ENCODE measurements at regions of chr1 and their contacts with region 1.

Region 1: DNA sequence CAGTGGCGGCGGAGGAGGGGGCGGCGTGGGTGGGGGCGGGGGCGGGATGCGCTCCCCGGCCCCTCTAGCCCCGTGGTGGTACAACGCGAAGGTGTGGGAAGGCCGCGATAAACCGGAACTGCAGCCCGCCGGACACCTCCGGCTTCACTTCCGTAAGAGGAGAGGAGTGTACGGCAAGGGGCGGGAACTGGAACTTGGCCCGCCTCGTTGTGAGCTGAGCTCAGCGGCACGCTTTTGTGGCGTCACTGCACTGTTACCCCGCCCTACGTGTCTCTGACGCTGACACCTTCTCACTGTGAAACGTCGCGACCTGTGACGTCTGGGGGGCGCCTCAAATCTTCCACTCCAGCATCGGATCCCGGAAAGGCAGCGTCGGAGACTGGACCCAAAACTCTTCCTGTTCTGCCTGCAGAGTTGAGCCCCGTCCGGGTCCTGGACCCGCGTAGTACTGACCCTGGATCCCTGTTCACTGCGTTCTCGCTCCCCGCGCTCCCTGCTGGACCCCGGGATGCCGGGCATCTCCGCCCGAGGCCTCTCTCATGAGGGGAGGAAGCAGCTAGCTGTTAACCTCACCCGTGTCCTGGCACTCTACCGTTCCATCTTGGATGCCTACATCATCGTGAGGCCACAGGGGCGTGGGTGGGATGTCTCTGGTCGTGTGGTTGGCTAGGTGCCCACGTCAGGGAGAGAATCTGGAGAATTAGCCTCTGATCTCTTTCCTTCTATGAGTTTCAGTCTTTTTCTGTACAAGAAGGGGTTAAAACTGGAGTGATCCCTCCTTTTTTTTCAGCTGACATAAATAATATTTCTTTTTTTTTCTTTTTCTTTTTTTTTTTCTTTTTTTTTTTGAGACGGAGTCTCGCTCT is at the start of gene ISG20L2:
- DNase-seq: peak; percentile 98
- H3K4me3 Mint-ChIP-seq: no peak within 1 kb of the TSS
- H3K27ac Mint-ChIP-seq: no peak within 1 kb of the TSS
- H3K4me1 Mint-ChIP-seq: peaks cover 27% of the 10 kb centered on the region
- H3K27me3 Mint-ChIP-seq: no peaks in the 10 kb centered on the region
- CTCF ChIP-seq: no peak
- total RNA-seq, gene ISG20L2: 49.9 and 57.5 TPM in 2 replicates

Region 2: GRCh38 chr1:156652131-156652991 is 76.5 kb before region 1 on chr1:
- CTCF ChIA-PET with region 1: interaction called, 127 read pairs
- POLR2A ChIA-PET with region 1: interaction called, 3 read pairs
- intact Hi-C with region 1: no loop called
- DNase-seq: peak; percentile 66
- H3K4me3 Mint-ChIP-seq: no peak overlapping the region
- H3K27ac Mint-ChIP-seq: no peak overlapping the region
- H3K4me1 Mint-ChIP-seq: peaks cover 3% of the 10 kb centered on the region
- H3K27me3 Mint-ChIP-seq: no peaks in the 10 kb centered on the region
- CTCF ChIP-seq: no peak

Region 3: GRCh38 chr1:156740679-156741612 is 12.1 kb after region 1 on chr1 and contains the start of gene MRPL24:
- CTCF ChIA-PET with region 1: interaction called, 136 read pairs
- POLR2A ChIA-PET with region 1: interaction called, 231 read pairs
- intact Hi-C with region 1: no loop called
- DNase-seq: peak; percentile 100
- H3K4me3 Mint-ChIP-seq: peak within 1 kb of the TSS; percentile 100
- H3K27ac Mint-ChIP-seq: peak within 1 kb of the TSS; percentile 98
- H3K4me1 Mint-ChIP-seq: peaks cover 30% of the 10 kb centered on the region
- H3K27me3 Mint-ChIP-seq: no peaks in the 10 kb centered on the region
- CTCF ChIP-seq: no peak
- total RNA-seq, gene MRPL24: 233 and 261 TPM in 2 replicates

Region 4: GRCh38 chr1:156767101-156767878 is 38.5 kb after region 1 on chr1 and contains the start of gene PRCC:
- CTCF ChIA-PET with region 1: interaction called, 115 read pairs
- POLR2A ChIA-PET with region 1: interaction called, 220 read pairs
- intact Hi-C with region 1: loop called (anchors 1 kb)
- DNase-seq: peak; percentile 100
- H3K4me3 Mint-ChIP-seq: no peak within 1 kb of the TSS
- H3K27ac Mint-ChIP-seq: no peak within 1 kb of the TSS
- H3K4me1 Mint-ChIP-seq: peaks cover 36% of the 10 kb centered on the region
- H3K27me3 Mint-ChIP-seq: no peaks in the 10 kb centered on the region
- CTCF ChIP-seq: no peak
- total RNA-seq, gene PRCC: 112 and 131 TPM in 2 replicates

Region 5: GRCh38 chr1:156838981-156839410 is 110.2 kb after region 1 on chr1:
- CTCF ChIA-PET with region 1: interaction called, 14 read pairs
- POLR2A ChIA-PET with region 1: no interaction called
- intact Hi-C with region 1: no loop called
- DNase-seq: peak; percentile 60
- H3K4me3 Mint-ChIP-seq: no peak overlapping the region
- H3K27ac Mint-ChIP-seq: no peak overlapping the region
- H3K4me1 Mint-ChIP-seq: no peaks in the 10 kb centered on the region
- H3K27me3 Mint-ChIP-seq: peaks cover 32% of the 10 kb centered on the region
- CTCF ChIP-seq: peak; percentile 93